AG04449 (cell line): ENCODE measurements at regions of chr6 and their contacts with region 1.

Region 1: GRCh38 chr6:30844091-30844535 is 40.2 kb upstream of the DDR1 start:
- DNase-seq: no peak
- H3K4me3 ChIP-seq: no peak overlapping the region
- CTCF ChIP-seq: no peak

Region 2: GRCh38 chr6:30493643-30494250 is 350.4 kb before region 1 on chr6:
- CTCF ChIA-PET with region 1: no interaction called
- POLR2A ChIA-PET with region 1: no interaction called
- DNase-seq: no peak
- H3K4me3 ChIP-seq: no peak overlapping the region
- CTCF ChIP-seq: no peak

Region 3: DNA sequence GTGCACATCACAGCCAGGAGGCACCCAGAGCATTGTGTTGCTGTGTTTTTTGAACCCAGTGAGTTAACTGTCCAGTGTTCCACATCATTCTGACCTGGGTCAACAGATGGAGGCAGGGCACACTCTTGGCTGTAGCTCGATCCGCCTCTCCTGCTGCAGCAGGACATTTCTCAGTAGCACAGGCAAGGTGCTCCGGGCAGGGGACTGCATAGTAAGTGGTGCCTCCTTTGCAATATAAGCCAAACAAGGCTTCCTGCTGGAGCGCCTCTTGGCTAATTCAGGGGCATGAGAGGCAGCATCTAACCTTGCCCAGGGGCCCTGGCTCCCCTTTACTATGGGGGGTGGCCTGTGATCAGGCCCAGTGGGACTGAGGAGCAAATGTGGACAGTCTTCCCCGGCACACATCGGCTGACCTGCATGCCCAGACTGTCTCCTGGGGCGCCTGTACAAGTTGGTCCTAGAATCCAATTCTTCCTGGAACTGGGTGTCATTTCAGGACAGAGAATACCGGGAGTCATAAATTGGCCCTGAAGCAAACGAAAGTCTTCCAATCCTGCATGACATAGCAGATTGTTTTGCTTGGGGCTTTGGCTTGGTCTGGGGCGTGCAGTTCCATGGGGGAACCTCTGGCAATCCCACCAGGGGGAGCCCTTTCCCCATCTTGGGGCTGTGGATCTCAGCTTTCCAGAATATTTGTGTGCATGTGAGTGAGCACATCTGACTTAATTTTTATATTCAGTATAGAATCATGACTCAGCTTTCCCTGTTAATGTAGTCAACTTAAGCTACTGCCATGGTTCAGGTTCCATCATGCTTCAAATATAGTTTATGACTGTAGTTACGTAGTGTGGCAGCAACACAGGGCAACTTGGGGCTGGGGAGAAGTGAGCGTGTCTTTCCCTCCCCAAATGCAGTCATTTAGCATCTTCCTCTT is 15.8 kb before region 1 on chr6:
- CTCF ChIA-PET with region 1: interaction called, 24 read pairs
- POLR2A ChIA-PET with region 1: interaction called, 3 read pairs
- DNase-seq: peak; percentile 70
- H3K4me3 ChIP-seq: no peak overlapping the region
- CTCF ChIP-seq: peak; percentile 90

Region 4: DNA sequence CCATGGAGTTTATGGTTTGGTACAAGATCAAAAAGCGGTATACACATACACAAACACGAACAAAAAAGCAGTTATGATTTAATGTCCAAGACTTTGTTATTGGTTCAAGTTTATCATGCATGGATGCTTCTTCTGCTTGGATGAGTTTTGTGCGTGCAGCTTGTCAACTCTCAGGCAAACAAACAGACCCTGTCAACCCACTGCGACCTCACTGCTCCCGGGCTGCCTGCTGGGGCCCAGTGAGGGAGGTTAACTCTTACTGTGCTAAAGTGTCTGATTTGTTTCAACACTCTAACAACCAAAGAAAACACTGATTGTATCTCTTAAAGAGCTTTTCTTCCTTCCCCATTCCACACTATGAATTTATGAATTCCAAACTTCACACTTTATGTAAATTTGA is 13.4 kb after region 1 on chr6:
- CTCF ChIA-PET with region 1: interaction called, 21 read pairs
- POLR2A ChIA-PET with region 1: no interaction called
- DNase-seq: no peak
- H3K4me3 ChIP-seq: no peak overlapping the region
- CTCF ChIP-seq: no peak